T-cell (primary cell): ENCODE measurements at regions of chr6 and their contacts with region 1.

Region 1: GRCh38 chr6:127855542-127856159 is 45.2 kb downstream of the THEMIS start:
- DNase-seq: peak in 33 of 35 experiments; percentile 8 to 75 (median 47)
- ATAC-seq: peak; percentile 61 to 78 (median 64)
- H3K4me3 ChIP-seq: no peak overlapping the region
- H3K4me3 Mint-ChIP-seq: peak overlapping the region in 1 of 3 donors; percentile 4
- H3K27ac ChIP-seq: peak overlapping the region; percentile 52
- H3K27ac Mint-ChIP-seq: peak overlapping the region; percentile 70 to 85
- H3K4me1 ChIP-seq: peaks cover 6 to 43% of the 10 kb centered on the region in 2 experiments
- H3K4me1 Mint-ChIP-seq: peaks cover 79 to 89% (median 82%) of the 10 kb centered on the region in 3 donors
- H3K27me3 ChIP-seq: no peaks in the 10 kb centered on the region
- H3K27me3 Mint-ChIP-seq: no peaks in the 10 kb centered on the region

Region 2: DNA sequence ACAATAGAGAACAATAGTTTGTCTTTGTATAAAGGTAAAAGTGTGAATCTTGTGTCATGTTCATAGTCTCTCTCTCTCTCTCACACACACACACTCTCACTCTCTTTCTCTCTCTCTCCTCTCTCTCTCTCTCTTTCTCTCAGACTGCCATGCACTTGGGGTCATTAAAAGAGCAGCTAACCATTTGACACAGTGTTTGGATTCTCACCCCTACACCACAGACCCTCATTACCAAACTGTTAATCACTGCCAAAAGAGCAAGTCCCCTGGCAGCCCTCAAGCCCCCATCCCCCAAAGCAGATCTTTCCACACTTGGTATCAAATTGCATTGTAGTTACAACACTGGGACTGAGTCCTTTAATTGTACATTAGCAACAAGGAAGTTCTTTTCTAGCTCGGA is 1043.0 kb before region 1 on chr6:
- CTCF ChIA-PET with region 1: no interaction called
- POLR2A ChIA-PET with region 1: no interaction called
- DNase-seq: no peak
- ATAC-seq: no peak
- H3K4me3 ChIP-seq: no peak overlapping the region
- H3K4me3 Mint-ChIP-seq: no peak overlapping the region
- H3K27ac ChIP-seq: no peak overlapping the region
- H3K27ac Mint-ChIP-seq: no peak overlapping the region
- H3K4me1 ChIP-seq: no peaks in the 10 kb centered on the region
- H3K4me1 Mint-ChIP-seq: peaks cover 0 to 2% (median 0%) of the 10 kb centered on the region in 3 donors
- H3K27me3 ChIP-seq: no peaks in the 10 kb centered on the region
- H3K27me3 Mint-ChIP-seq: peaks cover 1 to 2% of the 10 kb centered on the region in 2 donors

Region 3: GRCh38 chr6:127844529-127844928 is 11.1 kb before region 1 on chr6:
- CTCF ChIA-PET with region 1: interaction called, 10 read pairs
- POLR2A ChIA-PET with region 1: interaction called in 1 of 2 experiments, 3 read pairs
- DNase-seq: no peak
- ATAC-seq: no peak
- H3K4me3 ChIP-seq: no peak overlapping the region
- H3K4me3 Mint-ChIP-seq: no peak overlapping the region
- H3K27ac ChIP-seq: no peak overlapping the region
- H3K27ac Mint-ChIP-seq: no peak overlapping the region
- H3K4me1 ChIP-seq: peaks cover 0 to 3% of the 10 kb centered on the region in 2 experiments
- H3K4me1 Mint-ChIP-seq: peaks cover 47 to 71% (median 69%) of the 10 kb centered on the region in 3 donors
- H3K27me3 ChIP-seq: no peaks in the 10 kb centered on the region
- H3K27me3 Mint-ChIP-seq: no peaks in the 10 kb centered on the region

Region 4: GRCh38 chr6:127918506-127919427 is 63.1 kb after region 1 on chr6:
- CTCF ChIA-PET with region 1: interaction called, 4 to 29 read pairs
- POLR2A ChIA-PET with region 1: no interaction called
- DNase-seq: peak in 16 of 35 experiments; percentile 10 to 72 (median 31)
- ATAC-seq: peak; percentile 86 to 89 (median 88)
- H3K4me3 ChIP-seq: peak overlapping the region; percentile 62 to 63
- H3K4me3 Mint-ChIP-seq: peak overlapping the region; percentile 75 to 97 (median 94)
- H3K27ac ChIP-seq: peak overlapping the region; percentile 53
- H3K27ac Mint-ChIP-seq: peak overlapping the region; percentile 97 to 98
- H3K4me1 ChIP-seq: peaks cover 40 to 68% of the 10 kb centered on the region in 2 experiments
- H3K4me1 Mint-ChIP-seq: peaks cover 79 to 91% (median 87%) of the 10 kb centered on the region in 3 donors
- H3K27me3 ChIP-seq: no peaks in the 10 kb centered on the region
- H3K27me3 Mint-ChIP-seq: no peaks in the 10 kb centered on the region

Region 5: DNA sequence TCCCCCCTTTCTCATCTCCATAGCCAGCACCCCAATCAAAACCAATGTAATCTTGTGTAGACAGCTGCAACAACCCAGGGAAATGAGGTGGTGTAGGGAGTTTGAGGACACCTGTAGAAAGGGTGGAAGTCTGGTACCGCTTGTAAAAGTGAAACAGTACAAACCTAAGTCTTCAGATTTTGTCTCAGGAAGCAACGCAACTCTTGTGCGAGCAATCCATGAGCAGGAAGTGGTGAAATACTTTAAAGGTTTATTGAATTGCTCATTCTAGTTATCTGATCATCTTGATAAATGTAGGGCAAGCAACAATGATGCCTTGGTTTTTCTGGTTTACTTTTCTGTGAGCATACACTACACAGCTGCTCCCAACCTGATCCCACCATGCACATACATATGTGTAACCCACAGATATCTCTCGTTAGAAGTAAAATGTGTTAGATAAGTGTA is 116.3 kb after region 1 on chr6:
- CTCF ChIA-PET with region 1: interaction called, 11 to 45 read pairs
- POLR2A ChIA-PET with region 1: interaction called in 1 of 2 experiments, 3 read pairs
- DNase-seq: peak; percentile 21 to 86 (median 49)
- ATAC-seq: peak; percentile 86 to 90 (median 88)
- H3K4me3 ChIP-seq: peak overlapping the region; percentile 47 to 50
- H3K4me3 Mint-ChIP-seq: peak overlapping the region; percentile 81 to 82 (median 81)
- H3K27ac ChIP-seq: peak overlapping the region; percentile 90
- H3K27ac Mint-ChIP-seq: peak overlapping the region; percentile 95 to 98
- H3K4me1 ChIP-seq: peaks cover 19 to 42% of the 10 kb centered on the region in 2 experiments
- H3K4me1 Mint-ChIP-seq: peaks cover 69 to 75% (median 74%) of the 10 kb centered on the region in 3 donors
- H3K27me3 ChIP-seq: no peaks in the 10 kb centered on the region
- H3K27me3 Mint-ChIP-seq: no peaks in the 10 kb centered on the region

Region 6: GRCh38 chr6:128327890-128328289 is 472.2 kb after region 1 on chr6:
- CTCF ChIA-PET with region 1: interaction called, 14 to 57 read pairs
- POLR2A ChIA-PET with region 1: interaction called in 1 of 2 experiments, 3 read pairs
- DNase-seq: peak in 24 of 35 experiments; percentile 0 to 67 (median 8)
- ATAC-seq: peak; percentile 41 to 55 (median 51)
- H3K4me3 ChIP-seq: no peak overlapping the region
- H3K4me3 Mint-ChIP-seq: no peak overlapping the region
- H3K27ac ChIP-seq: no peak overlapping the region
- H3K27ac Mint-ChIP-seq: no peak overlapping the region
- H3K4me1 ChIP-seq: no peaks in the 10 kb centered on the region
- H3K4me1 Mint-ChIP-seq: no peaks in the 10 kb centered on the region
- H3K27me3 ChIP-seq: no peaks in the 10 kb centered on the region
- H3K27me3 Mint-ChIP-seq: no peaks in the 10 kb centered on the region